Activated CD8-positive, alpha-beta T cell treated with anti-CD3 and anti-CD28 coated beads for 36 hours (primary cell): ENCODE measurements at regions of chr20 and their contacts with region 1.

Region 1: DNA sequence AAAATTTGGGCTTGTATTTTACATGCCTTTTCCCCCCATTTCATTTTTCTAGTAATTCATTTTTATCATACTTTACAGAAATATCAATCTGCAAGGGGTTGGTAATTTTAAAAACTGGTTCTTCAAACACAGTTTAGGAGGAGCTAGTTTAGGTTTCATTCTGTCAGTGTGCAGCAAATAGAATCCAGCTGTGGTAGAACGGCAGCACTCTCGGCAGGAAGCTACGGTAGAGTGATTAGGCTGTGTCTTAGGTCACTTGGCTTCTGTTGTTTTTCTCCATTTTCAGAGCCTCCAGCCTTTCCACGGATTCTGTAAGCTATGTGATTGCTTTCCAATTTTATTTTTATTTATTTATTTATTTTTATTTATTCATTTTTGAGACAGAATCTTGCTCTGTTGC is 32.7 kb downstream of the TLDC2 start:
- DNase-seq: no peak
- ATAC-seq: no peak
- H3K4me3 Mint-ChIP-seq: no peak overlapping the region
- H3K27ac Mint-ChIP-seq: no peak overlapping the region
- H3K4me1 Mint-ChIP-seq: peaks cover 13% of the 10 kb centered on the region
- H3K27me3 Mint-ChIP-seq: no peaks in the 10 kb centered on the region
- CTCF ChIP-seq: no peak

Region 2: GRCh38 chr20:36573103-36573794 is 335.4 kb before region 1 on chr20 and contains the start of gene TGIF2:
- CTCF ChIA-PET with region 1: no interaction called
- POLR2A ChIA-PET with region 1: no interaction called
- intact Hi-C with region 1: no loop called
- DNase-seq: peak; percentile 91
- ATAC-seq: peak; percentile 81
- H3K4me3 Mint-ChIP-seq: peak within 1 kb of the TSS; percentile 91
- H3K27ac Mint-ChIP-seq: peak within 1 kb of the TSS; percentile 96
- H3K4me1 Mint-ChIP-seq: peaks cover 30% of the 10 kb centered on the region
- H3K27me3 Mint-ChIP-seq: no peaks in the 10 kb centered on the region
- CTCF ChIP-seq: no peak
- total RNA-seq, gene TGIF2: 55.3 to 56.8 TPM

Region 3: GRCh38 chr20:36629719-36630681 is 278.6 kb before region 1 on chr20:
- CTCF ChIA-PET with region 1: no interaction called
- POLR2A ChIA-PET with region 1: no interaction called
- intact Hi-C with region 1: no loop called
- DNase-seq: peak; percentile 75
- ATAC-seq: peak; percentile 94
- H3K4me3 Mint-ChIP-seq: peak overlapping the region; percentile 59
- H3K27ac Mint-ChIP-seq: peak overlapping the region; percentile 97
- H3K4me1 Mint-ChIP-seq: peaks cover 46% of the 10 kb centered on the region
- H3K27me3 Mint-ChIP-seq: no peaks in the 10 kb centered on the region
- CTCF ChIP-seq: no peak

Region 4: DNA sequence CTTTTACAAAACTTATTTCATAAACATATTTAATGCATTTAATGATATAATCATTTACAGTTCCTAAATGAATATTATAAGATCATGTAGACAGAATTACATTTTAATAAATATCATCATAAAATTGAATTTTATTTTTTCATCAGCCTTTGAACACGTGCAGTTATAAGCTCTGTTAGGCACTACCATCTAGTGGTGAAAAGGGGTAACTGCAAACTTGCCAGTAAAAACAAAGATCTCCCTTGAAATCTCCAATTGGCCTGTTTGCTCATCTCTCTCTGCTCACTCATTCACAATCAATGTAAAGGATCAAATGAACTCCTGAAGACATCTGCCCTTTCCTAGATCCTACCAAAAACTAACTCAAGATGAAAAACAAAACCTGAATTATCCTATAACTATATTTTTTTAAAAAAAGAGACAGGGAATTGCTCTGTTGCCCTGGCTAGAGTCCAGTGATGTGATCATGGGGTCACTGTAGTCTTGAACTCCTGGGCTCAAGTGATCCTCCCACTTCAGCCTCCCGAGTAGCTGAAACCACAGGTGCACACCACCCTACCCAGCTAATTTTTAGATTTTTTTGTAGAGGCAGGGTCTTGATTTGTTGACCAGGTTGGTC is 11.2 kb after region 1 on chr20:
- CTCF ChIA-PET with region 1: interaction called, 24 read pairs
- POLR2A ChIA-PET with region 1: interaction called, 4 read pairs
- intact Hi-C with region 1: no loop called
- DNase-seq: peak; percentile 26
- ATAC-seq: peak; percentile 88
- H3K4me3 Mint-ChIP-seq: no peak overlapping the region
- H3K27ac Mint-ChIP-seq: peak overlapping the region; percentile 73
- H3K4me1 Mint-ChIP-seq: peaks cover 16% of the 10 kb centered on the region
- H3K27me3 Mint-ChIP-seq: no peaks in the 10 kb centered on the region
- CTCF ChIP-seq: peak; percentile 97

Region 5: GRCh38 chr20:36969478-36970186 is 61.0 kb after region 1 on chr20:
- CTCF ChIA-PET with region 1: no interaction called
- POLR2A ChIA-PET with region 1: no interaction called
- intact Hi-C with region 1: no loop called
- DNase-seq: peak; percentile 52
- ATAC-seq: peak; percentile 64
- H3K4me3 Mint-ChIP-seq: peak overlapping the region; percentile 38
- H3K27ac Mint-ChIP-seq: peak overlapping the region; percentile 87
- H3K4me1 Mint-ChIP-seq: peaks cover 67% of the 10 kb centered on the region
- H3K27me3 Mint-ChIP-seq: no peaks in the 10 kb centered on the region
- CTCF ChIP-seq: no peak